ENCODE measurements at regions of chr2 and their contacts with region 1.

Region 1: DNA sequence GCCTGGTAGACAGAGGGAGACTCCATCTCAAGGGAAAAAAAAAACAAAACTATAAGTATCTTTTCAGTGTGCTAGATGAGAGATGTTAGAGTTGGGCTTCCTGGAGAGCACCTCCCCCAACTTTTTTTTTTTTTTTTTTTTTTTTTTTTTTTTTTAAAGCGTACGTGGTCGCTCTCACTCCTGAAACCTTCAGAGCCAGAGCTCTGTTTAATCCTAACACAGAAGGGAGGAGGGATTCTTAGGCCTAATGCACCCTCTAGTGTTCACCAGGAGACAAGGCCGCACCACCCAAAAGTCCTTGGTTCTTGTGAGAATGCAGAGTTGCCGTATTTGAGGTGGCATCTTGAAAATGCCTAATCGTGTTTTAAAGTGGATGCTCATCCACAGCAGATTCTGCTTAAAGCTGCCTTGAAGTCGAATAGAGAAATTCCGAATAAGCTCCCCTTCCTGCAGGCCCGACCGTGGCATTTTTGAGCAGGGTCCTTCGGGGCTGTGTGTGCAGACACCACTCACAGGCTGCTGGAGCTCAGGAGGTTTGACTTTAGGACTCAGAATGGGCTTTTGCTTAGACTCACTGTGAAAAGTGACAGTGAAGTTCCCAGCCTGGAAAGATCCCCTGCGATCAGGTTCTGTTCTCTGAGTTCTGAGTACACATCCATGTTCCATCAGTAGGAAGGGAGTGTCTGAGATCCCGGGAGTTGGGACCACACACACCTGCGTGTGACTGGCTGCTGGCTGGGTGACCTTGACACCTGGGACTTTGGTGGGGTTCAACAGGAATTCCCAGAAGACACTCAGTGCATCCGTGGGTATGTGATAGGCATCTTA is 252.6 kb downstream of the AGAP1 start:
- DNase-seq: peak; percentile 77
- H3K4me3 ChIP-seq: no peak overlapping the region
- H3K27ac ChIP-seq: no peak overlapping the region
- H3K4me1 ChIP-seq: no peaks in the 10 kb centered on the region
- H3K27me3 ChIP-seq: no peaks in the 10 kb centered on the region
- CTCF ChIP-seq: peak; percentile 80 to 82
- POLR2A ChIP-seq: no peak

Region 2: DNA sequence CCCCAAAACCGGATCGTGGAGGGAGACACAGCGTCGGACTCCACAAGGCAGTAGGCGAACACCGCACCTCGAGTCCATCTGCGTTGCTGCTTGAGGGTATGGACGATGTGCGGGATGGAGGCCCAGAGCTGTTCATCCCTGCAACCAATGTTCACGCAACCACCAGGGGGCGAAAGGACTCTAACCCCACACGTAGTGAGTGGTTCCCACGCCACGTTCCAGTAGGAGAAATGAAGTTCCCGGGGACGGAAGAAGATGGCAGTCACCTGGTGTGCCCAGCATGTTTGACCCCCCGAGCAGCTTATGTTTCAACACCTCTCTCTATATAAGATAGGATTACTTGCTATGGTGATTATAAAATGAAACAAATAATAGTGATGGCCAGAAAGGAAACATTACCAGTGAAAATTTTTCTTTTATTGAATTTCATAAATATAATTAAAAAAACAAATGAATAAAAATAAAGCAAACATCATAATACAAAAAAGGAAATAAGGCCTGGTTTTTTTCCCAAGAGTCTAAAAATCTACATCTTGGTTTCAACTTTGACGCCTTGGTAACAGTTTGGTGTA is 610.4 kb before region 1 on chr2:
- CTCF ChIA-PET with region 1: interaction called, 80 read pairs
- POLR2A ChIA-PET with region 1: no interaction called
- dilution Hi-C with region 1: no loop called
- intact Hi-C with region 1: loop called (anchors 1 kb)
- DNase-seq: peak; percentile 63
- H3K4me3 ChIP-seq: no peak overlapping the region
- H3K27ac ChIP-seq: no peak overlapping the region
- H3K4me1 ChIP-seq: peaks cover 2% of the 10 kb centered on the region
- H3K27me3 ChIP-seq: peaks cover 2 to 6% of the 10 kb centered on the region in 2 experiments
- CTCF ChIP-seq: peak; percentile 66 to 79
- POLR2A ChIP-seq: no peak

Region 3: DNA sequence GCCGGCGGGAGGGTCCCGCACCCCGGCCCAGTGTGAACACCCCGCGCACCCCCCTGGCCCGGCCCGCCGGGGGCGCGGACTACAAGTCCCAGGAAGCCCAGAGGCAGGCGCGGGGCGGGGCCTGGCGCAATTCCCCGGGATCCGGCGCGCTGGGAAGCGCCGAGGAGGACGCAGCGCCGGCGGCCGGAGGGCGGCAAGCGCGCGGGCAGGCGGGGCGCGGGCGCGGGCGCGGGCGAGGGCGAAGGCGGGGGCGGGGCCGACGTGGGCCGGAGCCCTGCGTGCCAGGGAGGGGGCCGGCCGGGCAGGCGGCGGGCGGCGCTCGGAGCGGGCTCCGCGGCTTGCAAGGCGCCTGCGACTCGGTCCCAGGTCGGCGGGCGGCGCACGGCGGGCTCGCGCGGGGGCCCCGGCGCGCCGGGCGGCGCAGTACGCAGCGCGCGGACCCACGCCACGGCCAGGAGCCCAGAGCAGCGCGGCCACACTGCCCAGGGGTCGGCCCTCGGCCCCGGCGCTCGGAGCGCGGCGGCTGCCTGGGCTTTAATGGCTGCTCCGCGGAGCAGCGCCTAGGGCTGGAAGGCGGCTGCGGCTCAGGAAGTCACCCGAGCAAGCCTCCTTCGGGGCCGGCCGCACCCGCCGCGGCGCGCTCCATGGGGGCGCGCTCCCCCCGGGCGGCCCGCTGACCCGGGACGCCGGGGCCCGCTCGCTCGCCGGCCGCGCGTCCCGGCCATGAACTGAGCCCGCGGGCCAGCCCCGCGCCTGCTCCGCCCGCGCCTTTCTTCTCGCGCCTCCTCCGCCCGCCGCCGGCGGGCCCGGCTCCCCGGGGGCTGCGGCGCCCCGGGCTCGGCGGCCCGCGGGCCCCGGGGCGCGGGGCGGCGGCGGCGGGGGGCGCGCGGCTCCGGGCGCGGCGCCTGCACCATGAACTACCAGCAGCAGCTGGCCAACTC is 252.4 kb before region 1 on chr2 and contains the start of gene AGAP1:
- CTCF ChIA-PET with region 1: interaction called, 3 read pairs
- POLR2A ChIA-PET with region 1: no interaction called
- dilution Hi-C with region 1: no loop called
- intact Hi-C with region 1: loop called (anchors 10 kb)
- DNase-seq: peak; percentile 83
- H3K4me3 ChIP-seq: peak within 1 kb of the TSS; percentile 43 to 56 (median 47)
- H3K27ac ChIP-seq: peak within 1 kb of the TSS; percentile 38
- H3K4me1 ChIP-seq: peaks cover 11% of the 10 kb centered on the region
- H3K27me3 ChIP-seq: no peaks in the 10 kb centered on the region
- CTCF ChIP-seq: no peak
- POLR2A ChIP-seq: peak; percentile 52
- total RNA-seq, gene AGAP1: 19.5 and 20.9 TPM in 2 replicates

Region 4: DNA sequence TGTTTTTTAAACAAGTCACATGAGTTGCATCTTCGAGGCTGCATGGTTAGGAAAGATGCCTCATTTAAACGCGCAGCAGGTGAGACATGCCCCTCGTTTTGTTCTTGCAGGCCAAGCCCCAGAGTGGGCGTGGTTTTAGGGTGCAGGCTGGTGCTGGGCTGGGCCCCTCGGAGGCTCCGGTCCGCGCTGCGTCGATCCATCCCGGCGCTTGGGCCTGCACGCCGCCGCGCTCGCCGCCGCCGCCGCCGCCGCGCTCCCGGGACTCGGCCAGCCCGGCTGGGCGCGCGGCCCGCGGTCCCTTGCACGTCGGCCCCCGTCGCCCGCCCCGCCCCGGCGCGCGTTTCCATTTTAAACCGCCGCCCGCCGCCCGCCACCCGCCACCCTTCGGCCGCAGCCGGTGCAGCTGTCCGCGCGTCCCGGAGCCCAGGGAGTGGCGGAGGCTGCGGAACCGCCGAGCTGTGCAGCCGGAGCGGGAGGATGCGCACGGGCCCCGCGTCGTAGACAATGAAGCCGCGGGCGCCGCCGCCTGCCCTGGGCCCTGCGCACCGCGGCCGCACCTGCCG is 77.1 kb before region 1 on chr2:
- CTCF ChIA-PET with region 1: interaction called, 7 read pairs
- POLR2A ChIA-PET with region 1: no interaction called
- dilution Hi-C with region 1: no loop called
- intact Hi-C with region 1: loop called (anchors 2 kb)
- DNase-seq: peak; percentile 35
- H3K4me3 ChIP-seq: peak overlapping the region in 1 of 3 experiments; percentile 48
- H3K27ac ChIP-seq: no peak overlapping the region
- H3K4me1 ChIP-seq: peaks cover 2% of the 10 kb centered on the region
- H3K27me3 ChIP-seq: peaks cover 22 to 27% of the 10 kb centered on the region in 2 experiments
- CTCF ChIP-seq: no peak
- POLR2A ChIP-seq: no peak

Region 5: DNA sequence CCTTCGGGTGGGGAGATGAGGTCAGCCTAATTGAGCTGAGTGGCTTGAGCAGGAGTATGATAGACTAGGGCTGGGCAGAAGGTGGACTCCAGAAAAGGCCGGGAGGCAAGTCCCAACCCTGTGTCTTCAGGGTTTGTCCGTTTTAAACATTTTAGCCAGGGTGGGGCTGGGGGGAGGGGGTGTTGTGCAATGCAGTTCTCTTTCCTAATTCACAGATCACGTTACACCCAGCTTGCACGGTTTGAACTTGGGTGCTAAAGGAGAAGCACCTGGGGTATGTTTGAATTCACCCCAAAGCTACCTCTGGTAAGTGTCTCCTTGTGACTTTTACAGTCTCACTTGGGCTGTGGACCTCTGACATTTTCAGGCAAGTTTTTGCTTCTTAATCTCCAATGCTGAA is 19.3 kb before region 1 on chr2:
- CTCF ChIA-PET with region 1: interaction called, 13 read pairs
- POLR2A ChIA-PET with region 1: no interaction called
- dilution Hi-C with region 1: no loop called
- intact Hi-C with region 1: no loop called
- DNase-seq: no peak
- H3K4me3 ChIP-seq: no peak overlapping the region
- H3K27ac ChIP-seq: no peak overlapping the region
- H3K4me1 ChIP-seq: no peaks in the 10 kb centered on the region
- H3K27me3 ChIP-seq: no peaks in the 10 kb centered on the region
- CTCF ChIP-seq: no peak
- POLR2A ChIP-seq: no peak

Region 6: DNA sequence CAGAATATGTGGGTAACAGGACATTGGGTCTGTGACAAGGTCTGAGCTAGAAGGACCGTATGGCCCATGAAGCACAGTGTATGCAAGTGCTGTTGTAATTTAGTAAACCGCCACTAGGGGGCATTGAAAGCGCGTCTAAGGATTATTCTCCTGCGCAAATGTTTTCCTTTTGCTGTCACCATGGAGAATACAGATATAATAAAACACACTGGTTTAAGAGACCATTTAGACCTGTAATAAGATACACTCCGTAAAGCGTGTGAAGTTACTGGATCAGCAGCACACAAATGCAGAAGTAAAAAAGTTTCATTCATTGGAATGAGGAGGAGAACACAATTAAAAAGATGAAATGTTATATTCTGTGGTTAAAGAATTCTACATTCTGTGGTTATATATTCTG is 19.8 kb after region 1 on chr2:
- CTCF ChIA-PET with region 1: interaction called, 11 read pairs
- POLR2A ChIA-PET with region 1: no interaction called
- dilution Hi-C with region 1: no loop called
- intact Hi-C with region 1: no loop called
- DNase-seq: peak; percentile 90
- H3K4me3 ChIP-seq: no peak overlapping the region
- H3K27ac ChIP-seq: no peak overlapping the region
- H3K4me1 ChIP-seq: no peaks in the 10 kb centered on the region
- H3K27me3 ChIP-seq: no peaks in the 10 kb centered on the region
- CTCF ChIP-seq: peak; percentile 67 to 73
- POLR2A ChIP-seq: no peak

Region 7: GRCh38 chr2:236334122-236334876 is 587.8 kb after region 1 on chr2:
- CTCF ChIA-PET with region 1: no interaction called
- POLR2A ChIA-PET with region 1: no interaction called
- dilution Hi-C with region 1: no loop called
- intact Hi-C with region 1: no loop called
- DNase-seq: no peak
- H3K4me3 ChIP-seq: no peak overlapping the region
- H3K27ac ChIP-seq: no peak overlapping the region
- H3K4me1 ChIP-seq: no peaks in the 10 kb centered on the region
- H3K27me3 ChIP-seq: no peaks in the 10 kb centered on the region
- CTCF ChIP-seq: no peak
- POLR2A ChIP-seq: no peak

Measured in endothelial cell of umbilical vein (primary cell).